ENCODE measurements at regions of chr5 and their contacts with region 1.

Region 1: GRCh38 chr5:129767906-129768380 is 20.0 kb downstream of the MINAR2 start:
- DNase-seq: peak; percentile 58 to 85 (median 74)
- ATAC-seq: peak; percentile 99
- H3K4me3 ChIP-seq: no peak overlapping the region
- H3K27ac ChIP-seq: no peak overlapping the region
- H3K4me1 ChIP-seq: no peaks in the 10 kb centered on the region
- H3K27me3 ChIP-seq: no peaks in the 10 kb centered on the region
- CTCF ChIP-seq: peak; percentile 93 to 99 (median 98)
- EP300 ChIP-seq: no peak
- POLR2A ChIP-seq: no peak
- RAD21 ChIP-seq: peak; percentile 89 to 96

Region 2: DNA sequence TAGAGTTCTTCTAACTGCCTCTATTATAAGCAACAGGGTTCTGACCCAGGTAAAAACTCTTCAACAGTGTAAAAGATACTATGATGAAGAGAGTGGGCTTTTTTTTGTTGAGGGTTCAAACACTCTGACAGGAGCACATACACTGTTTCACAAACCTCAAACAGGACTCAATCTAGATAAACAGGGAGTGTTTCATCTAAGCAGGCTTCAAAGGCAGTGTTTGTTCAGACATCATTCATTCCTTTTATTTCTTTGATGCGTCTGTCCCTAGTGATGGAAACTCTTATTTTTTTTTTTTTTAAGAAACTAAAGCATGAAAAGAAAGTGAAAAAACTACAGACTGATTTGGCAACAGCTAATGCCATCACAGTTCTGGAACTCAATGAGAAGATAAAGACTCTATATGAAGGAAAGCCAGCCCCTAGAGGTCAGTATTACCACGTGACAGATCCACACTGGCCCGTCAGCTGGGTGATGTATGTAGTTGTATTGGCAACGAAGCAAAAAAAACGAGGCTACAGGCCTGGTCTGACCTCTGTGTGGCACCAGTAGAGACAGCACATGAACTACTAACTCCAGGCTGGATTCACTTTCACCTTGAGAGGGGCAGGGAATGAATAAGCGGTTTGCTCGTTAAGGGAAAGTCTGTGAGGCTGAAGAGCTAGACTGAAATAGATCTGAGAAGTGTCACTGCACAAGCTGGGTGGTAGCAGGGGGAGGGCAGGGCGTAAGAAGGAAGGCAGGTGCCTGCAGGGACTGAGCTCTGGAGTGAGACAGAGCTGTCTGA is 1892.5 kb before region 1 on chr5:
- CTCF ChIA-PET with region 1: no interaction called
- POLR2A ChIA-PET with region 1: no interaction called
- in situ Hi-C with region 1: loop called (anchors 25 kb)
- intact Hi-C with region 1: loop called (anchors 5 kb)
- DNase-seq: peak; percentile 16 to 56 (median 20)
- ATAC-seq: peak; percentile 90
- H3K4me3 ChIP-seq: no peak overlapping the region
- H3K27ac ChIP-seq: no peak overlapping the region
- H3K4me1 ChIP-seq: no peaks in the 10 kb centered on the region
- H3K27me3 ChIP-seq: peaks cover 0 to 4% of the 10 kb centered on the region in 2 experiments; a peak in 1 of 5 replicates
- CTCF ChIP-seq: peak; percentile 36 to 68 (median 46); a peak in 4 of 6 replicates
- EP300 ChIP-seq: no peak
- POLR2A ChIP-seq: no peak
- RAD21 ChIP-seq: peak; percentile 64

Region 3: DNA sequence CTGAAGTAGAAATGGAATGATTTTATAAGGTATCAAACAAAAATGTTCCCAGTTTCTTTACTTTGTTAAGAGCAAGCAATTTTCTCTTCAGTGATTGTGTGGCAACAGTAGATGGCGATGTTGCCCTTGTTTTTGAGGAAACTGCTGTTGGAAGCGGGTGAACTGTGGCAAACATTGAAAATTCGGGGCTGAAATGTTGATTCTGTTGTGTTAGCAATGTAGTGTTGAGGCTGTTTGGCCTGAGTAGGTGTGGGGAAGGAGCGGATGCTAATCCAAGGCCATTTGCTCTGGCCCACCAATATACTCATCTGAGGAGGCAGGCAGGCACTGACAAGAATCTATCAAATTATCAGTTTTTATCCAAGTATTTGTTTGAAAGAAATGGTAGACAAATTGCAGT is 1554.6 kb before region 1 on chr5:
- CTCF ChIA-PET with region 1: interaction called, 21 read pairs
- POLR2A ChIA-PET with region 1: no interaction called
- in situ Hi-C with region 1: no loop called
- intact Hi-C with region 1: loop called (anchors 1 kb)
- DNase-seq: peak; percentile 18 to 65 (median 24)
- ATAC-seq: peak; percentile 83
- H3K4me3 ChIP-seq: no peak overlapping the region
- H3K27ac ChIP-seq: no peak overlapping the region
- H3K4me1 ChIP-seq: no peaks in the 10 kb centered on the region
- H3K27me3 ChIP-seq: peaks cover 0 to 6% of the 10 kb centered on the region in 2 experiments; a peak in 1 of 5 replicates
- CTCF ChIP-seq: peak; percentile 57 to 79 (median 70); a peak in 5 of 6 replicates
- EP300 ChIP-seq: no peak
- POLR2A ChIP-seq: no peak
- RAD21 ChIP-seq: peak; percentile 81 to 85

Region 4: DNA sequence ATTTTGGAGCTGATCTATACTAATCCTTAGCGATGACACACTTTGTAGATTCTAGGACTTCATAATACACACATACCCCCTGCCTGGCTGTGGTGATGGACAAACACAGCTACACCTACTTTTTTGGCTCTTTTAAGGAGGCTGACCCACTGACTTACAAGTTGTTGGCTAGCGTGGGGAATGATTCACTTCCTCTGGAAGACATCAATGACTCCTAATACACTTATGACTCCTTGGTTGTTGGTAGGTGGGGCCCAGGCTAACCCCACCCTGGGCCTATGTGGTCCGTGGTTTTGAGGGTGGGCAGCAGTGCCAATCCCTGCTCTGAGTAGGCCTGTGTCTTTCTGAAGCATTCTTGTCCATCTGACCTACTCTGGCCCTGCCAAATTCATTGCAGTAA is 1539.9 kb before region 1 on chr5:
- CTCF ChIA-PET with region 1: no interaction called
- POLR2A ChIA-PET with region 1: no interaction called
- in situ Hi-C with region 1: loop called (anchors 10 kb)
- intact Hi-C with region 1: no loop called
- DNase-seq: no peak
- ATAC-seq: no peak
- H3K4me3 ChIP-seq: no peak overlapping the region
- H3K27ac ChIP-seq: no peak overlapping the region
- H3K4me1 ChIP-seq: no peaks in the 10 kb centered on the region
- H3K27me3 ChIP-seq: no peaks in the 10 kb centered on the region
- CTCF ChIP-seq: no peak
- EP300 ChIP-seq: no peak
- POLR2A ChIP-seq: no peak
- RAD21 ChIP-seq: no peak

Region 5: DNA sequence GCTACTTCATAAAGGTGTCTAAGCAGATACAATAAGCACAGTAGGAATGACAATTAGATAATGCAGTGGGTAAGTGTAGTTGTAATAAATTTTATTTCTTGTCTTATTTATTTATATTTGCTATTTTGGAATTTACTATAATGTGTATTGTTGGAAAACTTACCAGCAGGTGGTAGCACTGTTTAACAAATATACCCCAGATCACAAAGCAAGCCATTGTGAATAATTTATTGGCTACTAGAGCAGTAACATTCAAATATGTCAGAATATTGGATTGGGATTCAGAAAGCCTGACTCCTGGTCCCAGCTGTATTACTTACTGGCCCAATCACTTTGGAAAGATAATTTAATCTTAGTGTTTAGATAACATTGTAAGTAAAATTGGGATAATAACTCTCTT is 595.4 kb before region 1 on chr5:
- CTCF ChIA-PET with region 1: no interaction called
- POLR2A ChIA-PET with region 1: no interaction called
- in situ Hi-C with region 1: no loop called
- intact Hi-C with region 1: loop called (anchors 5 kb)
- DNase-seq: no peak
- ATAC-seq: no peak
- H3K4me3 ChIP-seq: no peak overlapping the region
- H3K27ac ChIP-seq: no peak overlapping the region
- H3K4me1 ChIP-seq: no peaks in the 10 kb centered on the region
- H3K27me3 ChIP-seq: no peaks in the 10 kb centered on the region
- CTCF ChIP-seq: peak in 1 of 3 experiments; percentile 19; a peak in 1 of 6 replicates
- EP300 ChIP-seq: no peak
- POLR2A ChIP-seq: no peak
- RAD21 ChIP-seq: peak in 1 of 2 experiments; percentile 37; a peak in 1 of 4 replicates

Region 6: GRCh38 chr5:129852747-129853352 is 84.9 kb after region 1 on chr5:
- CTCF ChIA-PET with region 1: interaction called, 5 read pairs
- POLR2A ChIA-PET with region 1: no interaction called
- in situ Hi-C with region 1: no loop called
- intact Hi-C with region 1: loop called (anchors 2 kb)
- DNase-seq: peak; percentile 59 to 73 (median 70)
- ATAC-seq: peak; percentile 87
- H3K4me3 ChIP-seq: no peak overlapping the region
- H3K27ac ChIP-seq: no peak overlapping the region
- H3K4me1 ChIP-seq: no peaks in the 10 kb centered on the region
- H3K27me3 ChIP-seq: no peaks in the 10 kb centered on the region
- CTCF ChIP-seq: peak; percentile 53 to 74 (median 65)
- EP300 ChIP-seq: no peak
- POLR2A ChIP-seq: no peak
- RAD21 ChIP-seq: peak; percentile 31 to 64; a peak in 2 of 4 replicates

Region 7: GRCh38 chr5:131417240-131417869 is 1649.4 kb after region 1 on chr5:
- CTCF ChIA-PET with region 1: interaction called, 3 read pairs
- POLR2A ChIA-PET with region 1: no interaction called
- in situ Hi-C with region 1: no loop called
- intact Hi-C with region 1: loop called (anchors 10 kb)
- DNase-seq: peak; percentile 60 to 83 (median 60)
- ATAC-seq: peak; percentile 88
- H3K4me3 ChIP-seq: no peak overlapping the region
- H3K27ac ChIP-seq: no peak overlapping the region
- H3K4me1 ChIP-seq: no peaks in the 10 kb centered on the region
- H3K27me3 ChIP-seq: no peaks in the 10 kb centered on the region
- CTCF ChIP-seq: peak; percentile 63 to 85 (median 74)
- EP300 ChIP-seq: no peak
- POLR2A ChIP-seq: no peak
- RAD21 ChIP-seq: peak; percentile 77 to 87